ENCODE measurements at regions of chr7 and their contacts with region 1.

Region 1: GRCh38 chr7:116173051-116174028 is 37.0 kb upstream of the TES start:
- DNase-seq: peak in 4 of 5 donors; percentile 52 to 65 (median 60)
- H3K4me3 ChIP-seq: no peak overlapping the region
- H3K4me3 Mint-ChIP-seq: no peak overlapping the region
- H3K27ac ChIP-seq: no peak overlapping the region
- H3K27ac Mint-ChIP-seq: no peak overlapping the region
- H3K4me1 ChIP-seq: no peaks in the 10 kb centered on the region
- H3K4me1 Mint-ChIP-seq: no peaks in the 10 kb centered on the region
- H3K27me3 ChIP-seq: no peaks in the 10 kb centered on the region
- H3K27me3 Mint-ChIP-seq: peaks cover 10 to 11% of the 10 kb centered on the region in 2 donors

Region 2: DNA sequence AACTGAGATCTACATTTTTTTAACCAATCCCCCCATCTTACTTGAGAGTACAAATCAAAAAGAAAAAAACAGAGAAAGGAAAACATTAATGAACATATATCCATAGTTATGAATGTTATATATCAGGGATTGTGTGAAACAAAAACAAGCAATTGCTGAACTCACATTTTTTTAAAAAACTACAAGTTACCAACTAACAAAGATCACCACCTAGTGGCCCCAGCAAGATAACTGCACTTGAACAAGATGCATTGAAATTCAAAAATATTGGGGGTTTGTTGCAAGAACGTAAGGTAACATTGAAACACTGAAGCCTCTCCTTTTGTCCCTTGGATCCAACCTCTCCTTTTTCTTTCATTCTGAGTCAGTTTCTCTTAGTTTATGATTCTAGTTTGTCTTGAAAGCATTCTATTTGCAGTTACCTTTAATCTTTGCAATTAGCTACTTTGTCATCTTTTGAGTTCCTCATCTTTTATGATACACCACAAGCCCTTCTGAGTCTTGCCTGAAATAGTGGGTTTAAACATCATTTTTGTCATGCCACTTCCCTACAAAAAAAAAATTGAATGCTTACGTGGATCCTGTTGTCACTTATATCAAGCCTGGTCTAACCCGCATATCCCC is 50.3 kb before region 1 on chr7:
- CTCF ChIA-PET with region 1: no interaction called
- POLR2A ChIA-PET with region 1: no interaction called
- intact Hi-C with region 1: no loop called
- DNase-seq: peak in 1 of 5 donors; percentile 8
- H3K4me3 ChIP-seq: no peak overlapping the region
- H3K4me3 Mint-ChIP-seq: no peak overlapping the region
- H3K27ac ChIP-seq: no peak overlapping the region
- H3K27ac Mint-ChIP-seq: no peak overlapping the region
- H3K4me1 ChIP-seq: no peaks in the 10 kb centered on the region
- H3K4me1 Mint-ChIP-seq: no peaks in the 10 kb centered on the region
- H3K27me3 ChIP-seq: no peaks in the 10 kb centered on the region
- H3K27me3 Mint-ChIP-seq: peaks cover 2 to 4% of the 10 kb centered on the region in 2 donors

Region 3: DNA sequence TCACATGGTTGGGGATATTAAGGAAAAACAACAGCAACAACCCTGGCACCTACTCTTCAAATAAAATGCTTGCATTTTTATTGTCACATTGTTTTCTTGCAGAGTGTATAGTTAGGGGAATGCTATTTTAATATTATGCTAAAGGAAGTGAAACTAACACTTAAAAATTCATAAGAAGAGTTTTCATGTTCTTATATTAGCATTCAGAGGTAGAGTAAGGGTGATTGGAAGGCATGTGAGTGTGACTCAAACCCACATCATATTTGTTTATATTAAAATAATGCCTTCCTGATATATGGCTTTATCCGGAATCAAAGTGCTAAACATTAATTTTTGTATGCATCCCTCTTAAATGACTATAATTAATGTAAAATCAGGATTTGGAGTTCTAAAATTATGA is 22.8 kb before region 1 on chr7:
- CTCF ChIA-PET with region 1: no interaction called
- POLR2A ChIA-PET with region 1: no interaction called
- intact Hi-C with region 1: no loop called
- DNase-seq: no peak
- H3K4me3 ChIP-seq: no peak overlapping the region
- H3K4me3 Mint-ChIP-seq: no peak overlapping the region
- H3K27ac ChIP-seq: no peak overlapping the region
- H3K27ac Mint-ChIP-seq: no peak overlapping the region
- H3K4me1 ChIP-seq: no peaks in the 10 kb centered on the region
- H3K4me1 Mint-ChIP-seq: peaks cover 0 to 2% (median 0%) of the 10 kb centered on the region in 4 donors
- H3K27me3 ChIP-seq: no peaks in the 10 kb centered on the region
- H3K27me3 Mint-ChIP-seq: peaks cover 4 to 9% of the 10 kb centered on the region in 2 donors

Region 4: GRCh38 chr7:116242178-116242577 is 68.8 kb after region 1 on chr7:
- CTCF ChIA-PET with region 1: interaction called, 409 read pairs
- POLR2A ChIA-PET with region 1: no interaction called
- intact Hi-C with region 1: no loop called
- DNase-seq: no peak
- H3K4me3 ChIP-seq: no peak overlapping the region
- H3K4me3 Mint-ChIP-seq: no peak overlapping the region
- H3K27ac ChIP-seq: no peak overlapping the region
- H3K27ac Mint-ChIP-seq: peak overlapping the region in 1 of 7 donors; percentile 26
- H3K4me1 ChIP-seq: peaks cover 3% of the 10 kb centered on the region
- H3K4me1 Mint-ChIP-seq: peaks cover 46 to 67% (median 56%) of the 10 kb centered on the region in 4 donors
- H3K27me3 ChIP-seq: no peaks in the 10 kb centered on the region
- H3K27me3 Mint-ChIP-seq: no peaks in the 10 kb centered on the region

Region 5: DNA sequence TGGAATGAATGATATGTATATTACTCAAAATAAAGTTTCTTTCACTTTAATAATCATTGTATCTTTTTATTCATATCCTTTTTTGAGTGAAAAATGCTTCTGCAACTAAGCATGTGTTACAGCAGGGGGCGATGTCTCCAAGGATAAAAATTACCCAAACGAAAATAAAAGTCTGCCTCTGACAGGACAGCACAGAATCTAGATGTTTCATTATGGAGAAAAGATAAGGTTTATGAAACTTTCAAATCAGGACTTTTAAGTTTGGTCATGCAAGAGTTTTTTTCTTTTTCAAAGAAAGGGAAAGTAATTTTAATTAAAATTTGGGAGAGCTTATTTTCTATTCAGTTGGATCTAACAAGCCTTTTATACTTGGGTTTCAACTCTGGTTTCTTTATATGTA is 85.4 kb after region 1 on chr7:
- CTCF ChIA-PET with region 1: interaction called, 33 read pairs
- POLR2A ChIA-PET with region 1: no interaction called
- intact Hi-C with region 1: no loop called
- DNase-seq: peak in 4 of 5 donors; percentile 31 to 51 (median 40)
- H3K4me3 ChIP-seq: no peak overlapping the region
- H3K4me3 Mint-ChIP-seq: no peak overlapping the region
- H3K27ac ChIP-seq: no peak overlapping the region
- H3K27ac Mint-ChIP-seq: peak overlapping the region in 5 of 7 donors; percentile 2 to 72 (median 58)
- H3K4me1 ChIP-seq: no peaks in the 10 kb centered on the region
- H3K4me1 Mint-ChIP-seq: peaks cover 2 to 11% (median 7%) of the 10 kb centered on the region in 4 donors
- H3K27me3 ChIP-seq: no peaks in the 10 kb centered on the region
- H3K27me3 Mint-ChIP-seq: no peaks in the 10 kb centered on the region

Region 6: GRCh38 chr7:117127585-117128168 is 954.3 kb after region 1 on chr7:
- CTCF ChIA-PET with region 1: interaction called, 3 read pairs
- POLR2A ChIA-PET with region 1: no interaction called
- intact Hi-C with region 1: loop called (anchors 1 kb)
- DNase-seq: peak in 4 of 5 donors; percentile 34 to 47 (median 44)
- H3K4me3 ChIP-seq: no peak overlapping the region
- H3K4me3 Mint-ChIP-seq: no peak overlapping the region
- H3K27ac ChIP-seq: no peak overlapping the region
- H3K27ac Mint-ChIP-seq: no peak overlapping the region
- H3K4me1 ChIP-seq: no peaks in the 10 kb centered on the region
- H3K4me1 Mint-ChIP-seq: peaks cover 0 to 4% (median 2%) of the 10 kb centered on the region in 4 donors
- H3K27me3 ChIP-seq: no peaks in the 10 kb centered on the region
- H3K27me3 Mint-ChIP-seq: no peaks in the 10 kb centered on the region

Measured in CD4-positive, alpha-beta memory T cell (primary cell).